ENCODE measurements at regions of chr21 and their contacts with region 1.

Region 1: DNA sequence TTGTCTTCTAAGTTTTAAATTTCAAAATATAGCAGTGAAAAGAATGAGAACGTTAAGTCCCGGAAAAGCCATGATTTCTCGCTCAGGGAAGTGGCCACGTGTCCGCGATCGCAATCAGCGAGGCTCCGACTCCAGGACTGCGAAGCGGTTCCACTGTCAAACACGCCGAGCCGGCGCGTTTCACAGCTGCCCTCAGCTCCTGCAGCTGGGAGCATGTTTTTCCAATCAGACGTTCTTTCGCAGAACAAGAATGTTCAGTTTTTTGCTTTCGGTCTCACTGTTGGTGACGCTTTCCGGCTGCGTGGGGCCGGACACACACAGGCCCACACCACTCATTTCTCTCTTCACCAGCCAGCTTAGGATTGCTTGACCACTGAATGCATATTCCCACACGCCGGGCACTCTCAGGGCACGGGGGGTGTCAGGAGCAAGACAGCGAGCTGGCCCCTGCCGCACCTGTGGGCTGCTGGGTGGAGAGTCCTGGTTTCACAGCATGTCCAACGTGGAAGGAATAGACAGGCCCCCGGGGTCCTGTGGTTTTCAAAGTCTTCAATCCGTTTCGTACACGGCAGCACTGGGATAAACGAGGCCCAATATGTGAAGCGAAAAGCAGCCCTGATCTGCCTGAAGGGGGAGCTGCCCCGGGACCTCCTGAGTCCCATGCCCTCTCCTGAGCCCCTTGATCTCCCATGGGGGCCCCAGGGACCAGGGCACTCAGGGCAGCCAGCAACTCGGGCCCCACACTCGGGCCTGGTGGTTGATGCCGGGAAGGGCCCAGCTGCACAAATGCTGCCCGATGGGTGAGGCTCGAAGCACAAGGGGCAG is 47.3 kb upstream of the COL18A1 start:
- DNase-seq: no peak
- H3K4me3 ChIP-seq: no peak overlapping the region
- H3K27ac ChIP-seq: peak overlapping the region; percentile 91
- H3K4me1 ChIP-seq: peaks cover 39% of the 10 kb centered on the region
- H3K27me3 ChIP-seq: no peaks in the 10 kb centered on the region
- CTCF ChIP-seq: no peak
- POLR2A ChIP-seq: no peak

Region 2: DNA sequence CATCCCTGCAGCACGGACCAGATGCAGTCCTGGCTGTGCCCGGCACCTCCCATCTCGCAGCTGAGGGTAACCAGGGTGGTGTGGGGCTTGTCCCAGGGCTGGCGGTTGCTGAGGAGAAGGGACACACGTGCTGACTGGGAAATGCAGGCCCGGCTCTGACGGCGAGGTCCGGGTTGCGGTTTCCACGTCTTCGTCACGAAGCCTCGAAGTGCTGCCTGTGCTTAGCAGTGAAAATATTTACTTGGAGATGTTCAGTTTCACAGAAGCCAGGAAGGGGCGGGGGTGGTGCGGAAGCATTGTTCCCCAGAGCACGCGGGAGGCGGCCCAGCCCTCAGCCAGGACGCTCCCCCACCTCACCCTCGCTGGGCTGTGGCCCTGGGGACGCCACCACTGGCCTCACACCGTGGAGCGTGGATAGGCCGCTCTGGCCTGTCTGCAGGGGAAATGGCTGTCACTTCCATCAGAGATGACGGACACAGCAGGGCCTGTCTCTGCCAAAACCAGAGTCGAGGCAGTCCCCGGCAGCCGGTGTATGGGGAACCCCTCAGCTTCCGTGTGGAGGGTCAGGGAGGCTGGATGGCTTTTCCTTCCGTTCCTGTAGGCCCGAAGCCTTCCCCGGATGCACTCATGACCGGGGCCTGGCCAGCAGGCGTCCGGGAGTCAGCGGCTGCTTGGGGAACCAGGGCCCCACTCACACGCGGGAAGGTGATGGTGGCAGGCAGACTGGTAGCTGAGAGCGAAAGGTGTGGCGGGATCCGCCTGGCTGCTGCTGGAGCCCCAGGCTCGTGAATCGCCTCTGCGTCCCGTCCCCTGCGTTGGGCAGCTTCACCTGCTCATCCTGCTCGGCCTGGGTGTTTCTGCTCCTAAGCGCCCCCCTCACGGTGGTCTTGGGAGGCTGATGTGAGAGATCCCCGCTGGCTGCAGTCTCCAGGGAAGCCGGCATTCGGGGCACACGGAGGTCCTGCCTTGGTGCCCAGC is 55.3 kb before region 1 on chr21:
- intact Hi-C with region 1: loop called (anchors 5 kb)
- DNase-seq: no peak
- H3K4me3 ChIP-seq: no peak overlapping the region
- H3K27ac ChIP-seq: peak overlapping the region; percentile 13
- H3K4me1 ChIP-seq: peaks cover 39% of the 10 kb centered on the region
- H3K27me3 ChIP-seq: no peaks in the 10 kb centered on the region
- CTCF ChIP-seq: no peak
- POLR2A ChIP-seq: no peak